CD4-positive, alpha-beta memory T cell (primary cell): ENCODE measurements at regions of chr1 and their contacts with region 1.

Region 1: GRCh38 chr1:39653546-39654031 is 14.1 kb upstream of the HEYL start:
- DNase-seq: peak; percentile 65 to 74 (median 71)
- H3K4me3 ChIP-seq: no peak overlapping the region
- H3K4me3 Mint-ChIP-seq: peak overlapping the region in 1 of 8 donors; percentile 3
- H3K27ac ChIP-seq: no peak overlapping the region
- H3K27ac Mint-ChIP-seq: no peak overlapping the region
- H3K4me1 ChIP-seq: peaks cover 5% of the 10 kb centered on the region
- H3K4me1 Mint-ChIP-seq: peaks cover 4 to 11% (median 8%) of the 10 kb centered on the region in 4 donors
- H3K27me3 ChIP-seq: no peaks in the 10 kb centered on the region
- H3K27me3 Mint-ChIP-seq: peaks cover 2 to 7% of the 10 kb centered on the region in 2 donors

Region 2: GRCh38 chr1:39639305-39640130 is 14.1 kb before region 1 on chr1 and contains the start of gene HEYL:
- CTCF ChIA-PET with region 1: interaction called, 36 read pairs
- POLR2A ChIA-PET with region 1: no interaction called
- intact Hi-C with region 1: no loop called
- DNase-seq: peak; percentile 29 to 57 (median 43)
- H3K4me3 ChIP-seq: peak within 1 kb of the TSS in 1 of 2 donors; percentile 35
- H3K4me3 Mint-ChIP-seq: peak within 1 kb of the TSS; percentile 60 to 84 (median 67)
- H3K27ac ChIP-seq: no peak within 1 kb of the TSS
- H3K27ac Mint-ChIP-seq: no peak within 1 kb of the TSS
- H3K4me1 ChIP-seq: peaks cover 5% of the 10 kb centered on the region
- H3K4me1 Mint-ChIP-seq: peaks cover 0 to 2% (median under 1%) of the 10 kb centered on the region in 4 donors
- H3K27me3 ChIP-seq: no peaks in the 10 kb centered on the region
- H3K27me3 Mint-ChIP-seq: peaks cover 5 to 20% of the 10 kb centered on the region in 2 donors
- total RNA-seq, gene HEYL: 0.12 TPM in 1 of 2 experiments, not detected in the other

Region 3: GRCh38 chr1:39683591-39684312 is 30.2 kb after region 1 on chr1:
- CTCF ChIA-PET with region 1: interaction called, 34 read pairs
- POLR2A ChIA-PET with region 1: interaction called, 4 read pairs
- intact Hi-C with region 1: no loop called
- DNase-seq: peak; percentile 46 to 73 (median 59)
- H3K4me3 ChIP-seq: peak overlapping the region in 1 of 2 donors; percentile 24
- H3K4me3 Mint-ChIP-seq: peak overlapping the region in 7 of 8 donors; percentile 26 to 77 (median 59)
- H3K27ac ChIP-seq: no peak overlapping the region
- H3K27ac Mint-ChIP-seq: peak overlapping the region in 6 of 7 donors; percentile 11 to 92 (median 70)
- H3K4me1 ChIP-seq: peaks cover 46% of the 10 kb centered on the region
- H3K4me1 Mint-ChIP-seq: peaks cover 18 to 44% (median 38%) of the 10 kb centered on the region in 4 donors
- H3K27me3 ChIP-seq: no peaks in the 10 kb centered on the region
- H3K27me3 Mint-ChIP-seq: peaks cover 0 to 2% of the 10 kb centered on the region in 2 donors

Region 4: DNA sequence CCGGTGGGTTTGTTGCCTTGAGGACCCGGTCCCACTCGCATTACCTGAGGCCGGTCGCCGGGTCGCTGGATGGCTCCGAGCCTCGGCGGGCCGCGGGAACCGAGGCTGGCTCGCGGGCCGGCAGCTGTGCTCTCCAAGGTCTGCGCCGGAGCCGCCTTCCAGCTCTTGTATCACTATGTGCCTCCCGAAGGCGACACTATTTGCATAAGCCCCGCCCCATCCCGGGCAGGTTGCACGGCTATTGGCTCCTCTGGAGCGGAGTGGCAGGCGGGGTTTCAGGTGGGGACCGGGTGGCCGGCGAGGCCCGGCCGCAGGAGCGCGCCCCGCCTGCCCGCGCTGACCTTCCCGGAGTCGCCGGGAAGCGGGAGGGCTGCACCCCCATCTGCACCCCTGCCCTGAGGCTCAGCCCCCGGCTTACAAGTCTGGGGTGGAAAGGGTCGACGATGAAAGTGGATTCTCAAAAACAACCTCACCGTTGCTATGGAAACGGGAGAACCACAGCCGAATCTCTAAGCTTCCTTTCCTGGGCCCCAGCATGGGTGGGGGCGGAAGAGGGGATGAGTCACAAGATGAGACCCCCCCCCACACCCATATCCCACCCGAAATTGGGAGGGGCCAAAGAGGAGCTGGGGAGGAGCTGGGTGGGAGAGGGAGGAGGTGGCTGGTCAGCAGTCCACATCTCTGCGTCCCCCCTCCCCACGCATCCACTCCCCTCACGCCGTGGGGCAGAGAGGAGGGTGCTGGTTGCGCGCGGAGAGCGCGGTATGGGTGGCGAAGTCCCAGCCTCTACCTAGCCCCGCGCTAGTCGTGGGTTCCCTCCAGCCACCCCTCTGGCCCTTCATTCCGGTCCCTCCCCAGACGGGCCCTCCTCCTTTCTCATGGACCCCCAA is 37.9 kb after region 1 on chr1 and contains the start of gene HPCAL4:
- CTCF ChIA-PET with region 1: interaction called, 37 read pairs
- POLR2A ChIA-PET with region 1: interaction called, 6 read pairs
- intact Hi-C with region 1: no loop called
- DNase-seq: peak; percentile 91 to 95 (median 93)
- H3K4me3 ChIP-seq: peak within 1 kb of the TSS; percentile 69 to 88
- H3K4me3 Mint-ChIP-seq: peak within 1 kb of the TSS; percentile 83 to 95 (median 87)
- H3K27ac ChIP-seq: peak within 1 kb of the TSS; percentile 65
- H3K27ac Mint-ChIP-seq: peak within 1 kb of the TSS; percentile 88 to 95 (median 92)
- H3K4me1 ChIP-seq: peaks cover 46% of the 10 kb centered on the region
- H3K4me1 Mint-ChIP-seq: peaks cover 19 to 48% (median 39%) of the 10 kb centered on the region in 4 donors
- H3K27me3 ChIP-seq: no peaks in the 10 kb centered on the region
- H3K27me3 Mint-ChIP-seq: no peaks in the 10 kb centered on the region
- total RNA-seq, gene HPCAL4: 31.8 to 32.4 TPM

Region 5: GRCh38 chr1:39720094-39720999 is 66.8 kb after region 1 on chr1:
- CTCF ChIA-PET with region 1: interaction called, 11 read pairs
- POLR2A ChIA-PET with region 1: no interaction called
- intact Hi-C with region 1: loop called (anchors 1 kb)
- DNase-seq: peak in 4 of 5 donors; percentile 65 to 76 (median 72)
- H3K4me3 ChIP-seq: no peak overlapping the region
- H3K4me3 Mint-ChIP-seq: no peak overlapping the region
- H3K27ac ChIP-seq: no peak overlapping the region
- H3K27ac Mint-ChIP-seq: no peak overlapping the region
- H3K4me1 ChIP-seq: no peaks in the 10 kb centered on the region
- H3K4me1 Mint-ChIP-seq: peaks cover 0 to 3% (median under 1%) of the 10 kb centered on the region in 4 donors
- H3K27me3 ChIP-seq: peaks cover 5% of the 10 kb centered on the region
- H3K27me3 Mint-ChIP-seq: peaks cover 27 to 30% of the 10 kb centered on the region in 2 donors